Heart right ventricle (tissue), 16 donors: ENCODE measurements at regions of chr15 and their contacts with region 1.

Region 1: DNA sequence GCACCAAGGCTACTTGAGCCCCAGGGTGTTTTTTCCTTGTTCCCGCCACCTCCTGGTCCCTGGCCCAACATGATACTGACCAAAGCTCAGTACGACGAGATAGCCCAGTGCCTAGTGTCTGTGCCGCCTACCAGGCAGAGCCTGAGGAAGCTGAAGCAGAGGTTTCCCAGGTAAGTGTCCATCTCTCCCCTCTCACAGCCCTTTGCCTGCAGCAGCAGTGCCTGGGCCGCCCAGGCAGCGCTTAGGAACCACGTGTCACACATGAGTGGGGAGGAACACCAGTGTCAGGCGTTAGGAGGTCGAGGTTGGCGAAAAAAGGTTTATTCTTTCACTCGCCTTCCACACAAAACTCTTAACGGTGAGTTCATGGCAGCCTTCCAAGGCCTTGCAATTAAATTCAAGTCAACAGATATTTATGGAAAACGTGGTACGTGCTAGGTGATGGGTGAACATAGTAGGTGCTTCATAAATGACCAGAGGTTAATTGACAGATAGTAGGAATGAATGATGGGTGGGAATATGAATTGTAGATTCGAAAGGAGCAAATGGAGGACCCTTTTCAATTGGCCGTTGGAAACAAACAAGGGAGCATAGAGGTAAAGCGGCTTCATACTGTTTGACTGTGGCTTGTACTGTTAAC is 486 bp downstream of the CDIN1 start:
- DNase-seq: peak in 1 of 2 donors; percentile 24
- ATAC-seq: peak; percentile 19 to 67 (median 50)
- H3K4me3 ChIP-seq: peak overlapping the region; percentile 52 to 98 (median 72)
- H3K27ac ChIP-seq: peak overlapping the region; percentile 67 to 97 (median 88)
- H3K4me1 ChIP-seq: peaks cover 0 to 48% (median 17%) of the 10 kb centered on the region in 9 donors
- H3K27me3 ChIP-seq: no peaks in the 10 kb centered on the region
- CTCF ChIP-seq: no peak

Region 2: DNA sequence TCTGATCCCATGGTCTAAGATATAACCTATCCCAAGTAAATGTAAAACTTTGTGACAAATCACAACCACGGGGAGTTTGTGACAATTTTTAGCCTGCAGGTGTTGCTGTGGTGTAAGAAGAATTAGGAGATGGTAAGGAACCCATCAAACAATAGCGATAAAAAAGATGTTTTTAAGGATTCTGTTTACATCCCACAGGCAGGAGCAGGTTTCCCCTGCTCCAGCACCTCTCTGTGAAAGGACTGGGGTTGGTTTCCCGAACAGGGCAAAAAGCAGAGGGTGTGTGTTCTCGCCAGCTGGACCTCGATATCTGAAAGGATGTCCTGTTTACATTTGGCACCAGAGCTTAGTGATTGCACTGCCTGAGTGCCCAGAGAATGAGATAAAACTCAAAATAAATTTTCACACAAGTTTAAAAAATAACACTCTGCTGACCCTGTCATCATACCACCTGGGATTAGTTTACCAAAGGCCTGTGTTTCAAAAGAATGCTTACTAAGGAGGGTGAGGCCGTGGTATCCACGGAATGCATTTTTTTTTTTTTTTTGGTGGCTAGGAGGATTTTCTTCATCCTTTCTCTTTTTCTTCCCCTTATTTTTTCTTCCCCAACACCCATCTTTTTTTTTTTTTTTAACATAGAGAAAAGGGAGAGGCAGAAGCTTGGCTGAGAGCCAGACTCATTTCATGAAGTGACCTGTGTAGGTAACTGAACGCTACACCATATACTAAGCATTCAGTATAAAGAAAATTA is 882.2 kb before region 1 on chr15:
- intact Hi-C with region 1: loop called in 2 of 10 experiments (anchors 5 to 10 kb)
- DNase-seq: no peak
- ATAC-seq: peak; percentile 26 to 89 (median 72)
- H3K4me3 ChIP-seq: no peak overlapping the region
- H3K27ac ChIP-seq: peak overlapping the region; percentile 2 to 76 (median 52)
- H3K4me1 ChIP-seq: peaks cover 1 to 55% (median 38%) of the 10 kb centered on the region in 9 donors
- H3K27me3 ChIP-seq: no peaks in the 10 kb centered on the region
- CTCF ChIP-seq: peak in 4 of 9 donors; percentile 18 to 44 (median 33)

Region 3: DNA sequence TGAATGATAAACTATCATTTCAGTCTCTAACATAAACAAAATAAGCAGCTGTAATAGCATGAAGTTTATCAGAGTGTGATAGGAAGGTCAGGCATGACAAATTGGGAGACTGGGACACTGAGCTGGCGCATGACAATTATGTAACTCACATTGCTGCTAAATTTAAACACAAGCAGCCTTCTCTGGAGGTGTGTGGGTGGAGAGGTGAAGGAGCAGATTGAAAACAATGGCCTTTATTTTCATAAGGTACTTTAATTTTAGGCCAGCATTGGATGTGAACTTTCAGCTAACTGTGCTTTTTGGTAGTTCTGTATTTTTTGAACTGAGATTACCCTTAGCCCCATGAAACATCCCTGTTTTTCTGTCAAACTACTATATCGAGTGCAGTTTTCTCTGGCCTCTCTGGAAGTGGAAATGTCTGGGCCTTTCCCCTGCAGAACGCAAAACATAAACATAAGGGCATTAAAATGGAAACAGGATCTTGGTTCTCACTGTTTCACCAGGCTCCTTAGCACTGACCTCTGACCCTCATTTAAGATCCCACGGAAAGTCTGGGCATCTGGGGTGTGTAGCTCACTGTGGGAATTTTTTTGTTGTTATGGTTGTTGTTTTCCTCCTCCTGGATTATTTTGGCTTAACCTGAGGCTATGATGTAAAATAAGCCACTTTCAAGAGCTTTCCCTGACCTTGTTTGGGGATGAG is 873.9 kb before region 1 on chr15:
- intact Hi-C with region 1: loop called in 1 of 10 experiments (anchors 10 kb)
- DNase-seq: peak in 1 of 2 donors; percentile 65
- ATAC-seq: peak; percentile 91 to 99 (median 96)
- H3K4me3 ChIP-seq: no peak overlapping the region
- H3K27ac ChIP-seq: peak overlapping the region; percentile 52 to 91 (median 80)
- H3K4me1 ChIP-seq: peaks cover 0 to 40% (median 25%) of the 10 kb centered on the region in 9 donors
- H3K27me3 ChIP-seq: no peaks in the 10 kb centered on the region
- CTCF ChIP-seq: no peak

Region 4: GRCh38 chr15:36601497-36601932 is 21.6 kb after region 1 on chr15:
- intact Hi-C with region 1: loop called in 1 of 10 experiments (anchors 1 kb)
- DNase-seq: peak in 1 of 2 donors; percentile 77
- ATAC-seq: peak; percentile 87 to 92 (median 90)
- H3K4me3 ChIP-seq: peak overlapping the region in 3 of 10 donors; percentile 6 to 11 (median 10)
- H3K27ac ChIP-seq: peak overlapping the region; percentile 59 to 94 (median 88)
- H3K4me1 ChIP-seq: peaks cover 0 to 61% (median 24%) of the 10 kb centered on the region in 9 donors
- H3K27me3 ChIP-seq: no peaks in the 10 kb centered on the region
- CTCF ChIP-seq: no peak

Region 5: DNA sequence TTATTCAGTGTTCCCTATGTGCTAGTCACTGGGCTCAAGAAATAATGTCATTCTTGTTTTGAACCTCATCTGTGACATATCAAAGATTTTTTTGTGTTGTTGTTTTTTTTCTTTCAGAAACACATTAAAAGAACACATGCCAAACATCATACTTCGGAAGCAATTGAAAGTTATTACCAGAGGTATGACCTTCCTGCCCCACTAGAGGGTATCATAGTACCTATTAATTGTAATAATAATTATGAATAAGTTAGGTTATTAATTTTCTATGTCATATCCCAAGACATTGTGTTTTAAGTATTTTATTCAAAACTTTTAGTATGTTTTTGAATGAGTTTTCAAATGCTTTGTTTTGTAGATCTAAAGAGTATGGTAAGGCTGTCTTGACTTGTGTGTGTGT is 65.2 kb after region 1 on chr15:
- intact Hi-C with region 1: no loop called
- DNase-seq: no peak
- ATAC-seq: no peak
- H3K4me3 ChIP-seq: no peak overlapping the region
- H3K27ac ChIP-seq: no peak overlapping the region
- H3K4me1 ChIP-seq: peaks cover 0 to 28% (median 0%) of the 10 kb centered on the region in 9 donors
- H3K27me3 ChIP-seq: no peaks in the 10 kb centered on the region
- CTCF ChIP-seq: peak in 6 of 9 donors; percentile 15 to 47 (median 27)